IMR-90 (cell line): ENCODE measurements at regions of chr1 and their contacts with region 1.

Region 1: GRCh38 chr1:145996433-145997015 is at the start of gene TXNIP:
- DNase-seq: peak; percentile 96
- ATAC-seq: peak; percentile 97
- H3K4me3 ChIP-seq: peak within 1 kb of the TSS; percentile 87
- H3K27ac ChIP-seq: peak within 1 kb of the TSS; percentile 76
- H3K4me1 ChIP-seq: peaks cover 10% of the 10 kb centered on the region
- H3K27me3 ChIP-seq: no peaks in the 10 kb centered on the region
- CTCF ChIP-seq: no peak
- POLR2A ChIP-seq: peak; percentile 97
- RAD21 ChIP-seq: no peak
- total RNA-seq, gene TXNIP: 60.0 and 77.2 TPM in 2 replicates

Region 2: DNA sequence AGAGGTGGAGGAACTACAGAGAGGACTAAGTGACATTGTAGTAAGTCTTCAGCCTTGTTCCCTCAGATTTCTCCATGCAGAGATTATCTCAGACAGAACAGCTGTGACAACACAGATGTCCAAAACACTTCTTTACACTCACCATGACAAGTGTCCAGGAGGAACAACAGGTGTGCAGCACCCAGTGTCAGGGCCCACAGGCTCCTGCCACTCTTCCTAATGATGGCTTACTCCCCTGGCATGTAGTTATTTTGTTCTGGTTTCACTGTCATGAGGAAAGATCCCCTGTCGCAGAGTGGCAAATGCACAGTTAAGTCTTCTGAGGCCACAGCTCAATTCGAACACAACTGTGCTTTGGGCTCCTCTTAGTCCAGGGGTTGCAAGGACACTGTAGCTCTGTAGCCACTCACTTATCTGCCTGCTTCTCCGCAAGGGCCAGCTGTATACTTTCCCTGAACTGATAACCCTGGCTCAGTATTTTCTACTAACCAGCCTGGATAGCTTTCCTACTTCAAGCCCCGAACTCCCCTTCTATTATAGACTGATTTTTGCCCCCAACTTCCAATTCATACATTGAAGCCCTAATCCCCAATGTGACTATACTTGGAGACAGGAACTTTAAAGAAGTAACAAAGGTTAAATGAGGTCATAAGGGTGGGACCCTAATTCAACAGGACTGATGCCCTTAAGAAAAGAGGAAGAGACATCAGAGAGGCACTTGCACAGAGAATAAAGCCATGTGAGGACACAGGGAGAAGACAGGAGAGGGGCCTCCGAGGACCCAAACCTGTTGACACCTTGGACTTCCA is 300.5 kb before region 1 on chr1:
- CTCF ChIA-PET with region 1: no interaction called
- POLR2A ChIA-PET with region 1: no interaction called
- dilution Hi-C with region 1: no loop called
- in situ Hi-C with region 1: no loop called
- intact Hi-C with region 1: no loop called
- DNase-seq: no peak
- ATAC-seq: no peak
- H3K4me3 ChIP-seq: no peak overlapping the region
- H3K27ac ChIP-seq: no peak overlapping the region
- H3K4me1 ChIP-seq: peaks cover 6% of the 10 kb centered on the region; the same call in 1 of the 2 replicates
- H3K27me3 ChIP-seq: no peaks in the 10 kb centered on the region
- CTCF ChIP-seq: no peak
- POLR2A ChIP-seq: no peak
- RAD21 ChIP-seq: no peak

Region 3: DNA sequence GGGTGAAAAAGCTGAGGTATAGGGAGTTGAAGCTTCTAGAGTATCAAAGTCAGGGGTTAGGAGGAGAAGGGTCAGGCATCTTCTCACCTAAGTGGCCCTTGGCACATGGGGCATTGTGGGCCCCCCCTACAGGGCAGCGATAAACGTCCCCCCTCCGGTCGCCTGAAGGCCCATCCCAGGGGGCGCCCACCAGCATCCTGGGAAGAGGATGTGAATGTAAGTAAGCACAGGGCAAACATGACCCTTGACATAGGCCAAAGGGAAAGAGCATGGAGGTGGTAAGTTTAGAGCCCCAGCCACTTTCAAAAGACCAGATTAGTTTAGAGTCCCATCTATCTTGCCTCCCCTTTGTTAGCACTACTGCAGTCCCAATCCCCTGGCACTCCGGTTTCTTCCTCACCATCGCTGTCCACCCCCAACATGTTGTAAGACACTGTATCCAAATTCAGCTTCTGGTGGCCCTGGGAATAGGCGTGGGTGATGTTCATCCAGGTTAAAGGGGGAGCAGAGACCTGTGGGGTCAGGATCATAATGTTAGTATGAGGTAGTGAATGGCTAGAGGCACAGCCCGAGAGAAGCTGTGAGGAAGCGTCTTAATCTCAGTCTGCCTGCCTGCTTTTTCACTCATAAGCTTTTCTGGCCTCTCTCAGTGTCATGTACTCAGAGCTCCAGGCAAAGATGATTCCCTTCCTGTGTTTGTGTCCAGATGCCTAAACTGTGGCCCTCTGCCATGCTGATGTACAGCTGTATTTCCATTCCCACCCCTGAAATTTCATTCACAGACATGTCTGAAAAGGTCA is 89.4 kb before region 1 on chr1:
- CTCF ChIA-PET with region 1: no interaction called
- POLR2A ChIA-PET with region 1: no interaction called
- dilution Hi-C with region 1: no loop called
- in situ Hi-C with region 1: no loop called
- intact Hi-C with region 1: no loop called
- DNase-seq: peak; percentile 30
- ATAC-seq: no peak
- H3K4me3 ChIP-seq: no peak overlapping the region
- H3K27ac ChIP-seq: no peak overlapping the region
- H3K4me1 ChIP-seq: peaks cover 7% of the 10 kb centered on the region
- H3K27me3 ChIP-seq: no peaks in the 10 kb centered on the region
- CTCF ChIP-seq: no peak
- POLR2A ChIP-seq: no peak
- RAD21 ChIP-seq: no peak

Region 4: GRCh38 chr1:145918144-145918992 is 78.2 kb before region 1 on chr1 and contains the start of gene PEX11B:
- CTCF ChIA-PET with region 1: no interaction called
- POLR2A ChIA-PET with region 1: no interaction called
- dilution Hi-C with region 1: no loop called
- in situ Hi-C with region 1: loop called (anchors 5 kb)
- intact Hi-C with region 1: loop called (anchors 5 kb)
- DNase-seq: peak; percentile 91
- ATAC-seq: peak; percentile 94
- H3K4me3 ChIP-seq: peak within 1 kb of the TSS; percentile 96
- H3K27ac ChIP-seq: peak within 1 kb of the TSS; percentile 85
- H3K4me1 ChIP-seq: peaks cover 8% of the 10 kb centered on the region
- H3K27me3 ChIP-seq: no peaks in the 10 kb centered on the region
- CTCF ChIP-seq: no peak
- POLR2A ChIP-seq: peak; percentile 49; the same call in 1 of the 2 replicates
- RAD21 ChIP-seq: no peak
- total RNA-seq, gene PEX11B: 15.4 and 19.7 TPM in 2 replicates

Region 5: GRCh38 chr1:145927063-145927886 is 69.2 kb before region 1 on chr1 and contains the start of gene RBM8A:
- CTCF ChIA-PET with region 1: no interaction called
- POLR2A ChIA-PET with region 1: no interaction called
- dilution Hi-C with region 1: no loop called
- in situ Hi-C with region 1: no loop called
- intact Hi-C with region 1: loop called (anchors 2 kb)
- DNase-seq: peak; percentile 99
- ATAC-seq: peak; percentile 100
- H3K4me3 ChIP-seq: peak within 1 kb of the TSS; percentile 76
- H3K27ac ChIP-seq: peak within 1 kb of the TSS; percentile 87
- H3K4me1 ChIP-seq: peaks cover 3% of the 10 kb centered on the region
- H3K27me3 ChIP-seq: no peaks in the 10 kb centered on the region
- CTCF ChIP-seq: peak; percentile 62
- POLR2A ChIP-seq: peak; percentile 97
- RAD21 ChIP-seq: no peak
- total RNA-seq, gene RBM8A: 94.1 and 228 TPM in 2 replicates

Region 6: GRCh38 chr1:145963995-145964901 is 32.3 kb before region 1 on chr1 and contains the starts of genes ANKRD34A and POLR3GL:
- CTCF ChIA-PET with region 1: no interaction called
- POLR2A ChIA-PET with region 1: no interaction called
- dilution Hi-C with region 1: no loop called
- in situ Hi-C with region 1: no loop called
- intact Hi-C with region 1: loop called (anchors 2 kb)
- DNase-seq: peak; percentile 89
- ATAC-seq: peak; percentile 86
- H3K4me3 ChIP-seq: peak within 1 kb of the TSS; percentile 61
- H3K27ac ChIP-seq: peak within 1 kb of the TSS; percentile 76
- H3K4me1 ChIP-seq: peaks cover 28% of the 10 kb centered on the region
- H3K27me3 ChIP-seq: no peaks in the 10 kb centered on the region
- CTCF ChIP-seq: no peak
- POLR2A ChIP-seq: no peak; the same call in 1 of the 2 replicates
- RAD21 ChIP-seq: no peak
- total RNA-seq, gene ANKRD34A: 0.56 and 0.90 TPM in 2 replicates
- total RNA-seq, gene POLR3GL: 7.9 and 10.3 TPM in 2 replicates

Region 7: DNA sequence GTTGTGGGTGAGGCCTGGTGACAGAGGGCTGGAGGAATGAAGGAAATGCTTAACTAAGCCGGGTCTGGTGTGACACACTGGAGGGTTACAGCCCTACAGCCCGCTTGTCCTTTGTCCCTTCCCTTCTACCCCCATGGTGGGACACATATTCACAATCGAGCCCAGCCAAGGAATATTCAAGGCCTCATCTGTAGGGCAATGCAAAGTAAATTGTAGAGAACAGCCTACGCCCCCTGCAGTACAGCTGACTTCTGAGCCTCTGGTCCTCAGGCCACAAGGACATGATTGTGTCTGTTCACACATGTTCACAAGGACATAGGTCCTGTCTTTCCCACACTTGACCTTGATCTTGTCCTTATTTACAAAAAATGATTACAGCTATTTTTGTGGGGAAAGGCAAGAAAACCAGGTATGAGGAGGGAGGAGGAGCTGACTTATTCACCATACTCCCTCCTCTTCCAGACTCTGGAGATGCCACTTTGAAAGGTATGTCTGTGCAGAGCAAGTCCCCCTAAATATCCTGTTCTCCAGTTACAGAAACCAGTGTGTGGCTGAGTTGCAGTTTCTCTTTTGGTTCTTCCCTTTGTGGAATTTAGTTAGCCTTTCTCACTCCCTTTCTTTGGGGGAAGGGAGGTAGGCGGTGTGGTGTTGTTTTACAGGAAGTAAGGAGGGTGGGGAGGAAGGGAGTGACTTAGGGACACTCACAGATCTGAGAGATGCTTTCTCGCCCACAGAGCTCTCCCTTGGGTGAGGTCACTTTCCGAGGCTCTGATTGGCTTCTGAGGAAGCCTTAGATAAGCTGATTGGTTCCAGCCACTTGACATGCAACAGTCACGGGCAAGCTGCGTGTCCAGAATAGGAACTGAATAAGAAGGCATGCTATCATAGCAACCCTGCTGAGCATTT is 17.4 kb before region 1 on chr1:
- CTCF ChIA-PET with region 1: interaction called, 5 read pairs
- POLR2A ChIA-PET with region 1: interaction called, 11 read pairs
- dilution Hi-C with region 1: no loop called
- in situ Hi-C with region 1: no loop called
- intact Hi-C with region 1: loop called (anchors 1 kb)
- DNase-seq: peak; percentile 100
- ATAC-seq: peak; percentile 94
- H3K4me3 ChIP-seq: peak overlapping the region; percentile 12; the same call in 1 of the 2 replicates
- H3K27ac ChIP-seq: peak overlapping the region; percentile 87
- H3K4me1 ChIP-seq: peaks cover 16% of the 10 kb centered on the region
- H3K27me3 ChIP-seq: no peaks in the 10 kb centered on the region
- CTCF ChIP-seq: no peak
- POLR2A ChIP-seq: peak; percentile 67; the same call in 1 of the 2 replicates
- RAD21 ChIP-seq: no peak

Region 8: GRCh38 chr1:146036965-146037646 is 40.6 kb after region 1 on chr1:
- CTCF ChIA-PET with region 1: no interaction called
- POLR2A ChIA-PET with region 1: interaction called, 3 read pairs
- dilution Hi-C with region 1: no loop called
- in situ Hi-C with region 1: no loop called
- intact Hi-C with region 1: loop called (anchors 2 kb)
- DNase-seq: peak; percentile 87
- ATAC-seq: peak; percentile 49
- H3K4me3 ChIP-seq: peak overlapping the region; percentile 69
- H3K27ac ChIP-seq: peak overlapping the region; percentile 29
- H3K4me1 ChIP-seq: no peaks in the 10 kb centered on the region
- H3K27me3 ChIP-seq: no peaks in the 10 kb centered on the region
- CTCF ChIP-seq: no peak
- POLR2A ChIP-seq: no peak
- RAD21 ChIP-seq: no peak